ENCODE measurements at regions of chr4 and their contacts with region 1.

Region 1: DNA sequence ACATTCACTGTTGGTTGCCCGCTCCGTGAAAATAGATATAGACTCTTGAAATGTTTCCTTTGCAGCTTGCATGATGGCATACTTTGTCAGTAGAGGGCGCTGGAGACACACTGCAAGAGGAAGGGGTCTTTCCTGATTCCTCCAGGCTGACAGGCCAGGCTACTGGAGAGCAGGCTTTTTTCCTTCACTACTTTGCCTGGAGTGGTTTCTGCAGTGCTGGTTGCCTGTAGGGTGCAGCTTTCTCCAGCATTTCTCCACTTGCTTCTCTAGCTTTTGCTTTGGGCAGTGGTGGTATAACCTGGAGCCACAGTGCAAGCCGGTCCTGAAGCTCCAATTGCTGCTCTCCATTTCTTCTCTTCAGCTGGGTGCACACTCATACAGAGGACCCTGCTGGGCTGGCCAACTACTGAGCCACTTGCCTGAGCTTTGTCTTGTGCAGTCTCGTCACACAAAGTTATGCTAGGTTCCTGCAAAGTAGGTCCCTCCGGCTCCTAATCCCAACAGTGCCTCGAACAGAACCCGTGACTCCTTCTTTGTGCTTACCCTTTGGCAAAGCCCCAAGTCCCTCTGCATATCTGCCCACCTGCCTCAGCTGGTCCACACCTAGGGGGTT is 46.3 kb downstream of the RASSF6 start:
- DNase-seq: peak; percentile 54
- ATAC-seq: peak; percentile 88
- H3K4me3 ChIP-seq: no peak overlapping the region
- H3K27ac ChIP-seq: no peak overlapping the region
- H3K4me1 ChIP-seq: no peaks in the 10 kb centered on the region
- H3K27me3 ChIP-seq: no peaks in the 10 kb centered on the region
- CTCF ChIP-seq: peak; percentile 68 to 91 (median 88); a peak in 5 of 6 replicates
- POLR2A ChIP-seq: no peak
- RAD21 ChIP-seq: peak; percentile 86

Region 2: DNA sequence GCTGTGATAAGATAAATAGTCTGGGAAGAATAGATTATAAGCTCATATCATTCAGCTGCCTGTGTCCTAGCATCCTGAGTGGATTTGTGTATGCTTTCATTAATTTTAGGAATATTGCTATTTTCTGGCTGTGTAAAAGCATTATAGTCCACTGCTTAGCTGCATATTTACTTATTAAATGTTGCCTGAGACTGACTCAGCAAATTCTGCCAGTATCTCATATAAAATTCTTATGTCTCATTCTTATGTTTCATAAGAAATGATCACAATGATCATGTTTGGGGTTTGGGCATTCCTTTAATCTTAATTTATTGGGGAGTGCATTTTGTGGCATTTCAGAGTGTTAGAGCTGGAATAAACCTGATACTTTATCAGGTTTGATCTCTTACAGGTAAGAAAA is 11.4 kb after region 1 on chr4:
- CTCF ChIA-PET with region 1: interaction called, 11 read pairs
- POLR2A ChIA-PET with region 1: no interaction called
- RAD21 ChIA-PET with region 1: no interaction called
- intact Hi-C with region 1: no loop called
- DNase-seq: no peak
- ATAC-seq: no peak
- H3K4me3 ChIP-seq: no peak overlapping the region
- H3K27ac ChIP-seq: no peak overlapping the region
- H3K4me1 ChIP-seq: no peaks in the 10 kb centered on the region
- H3K27me3 ChIP-seq: no peaks in the 10 kb centered on the region
- CTCF ChIP-seq: no peak
- POLR2A ChIP-seq: no peak
- RAD21 ChIP-seq: no peak

Region 3: GRCh38 chr4:73872316-73873108 is 298.6 kb after region 1 on chr4:
- CTCF ChIA-PET with region 1: no interaction called
- POLR2A ChIA-PET with region 1: no interaction called
- RAD21 ChIA-PET with region 1: no interaction called
- intact Hi-C with region 1: no loop called
- DNase-seq: no peak
- ATAC-seq: no peak
- H3K4me3 ChIP-seq: no peak overlapping the region
- H3K27ac ChIP-seq: no peak overlapping the region
- H3K4me1 ChIP-seq: peaks cover 0 to 13% of the 10 kb centered on the region in 2 experiments; a peak in 3 of 4 replicates
- H3K27me3 ChIP-seq: no peaks in the 10 kb centered on the region
- CTCF ChIP-seq: no peak
- POLR2A ChIP-seq: no peak
- RAD21 ChIP-seq: no peak

Region 4: DNA sequence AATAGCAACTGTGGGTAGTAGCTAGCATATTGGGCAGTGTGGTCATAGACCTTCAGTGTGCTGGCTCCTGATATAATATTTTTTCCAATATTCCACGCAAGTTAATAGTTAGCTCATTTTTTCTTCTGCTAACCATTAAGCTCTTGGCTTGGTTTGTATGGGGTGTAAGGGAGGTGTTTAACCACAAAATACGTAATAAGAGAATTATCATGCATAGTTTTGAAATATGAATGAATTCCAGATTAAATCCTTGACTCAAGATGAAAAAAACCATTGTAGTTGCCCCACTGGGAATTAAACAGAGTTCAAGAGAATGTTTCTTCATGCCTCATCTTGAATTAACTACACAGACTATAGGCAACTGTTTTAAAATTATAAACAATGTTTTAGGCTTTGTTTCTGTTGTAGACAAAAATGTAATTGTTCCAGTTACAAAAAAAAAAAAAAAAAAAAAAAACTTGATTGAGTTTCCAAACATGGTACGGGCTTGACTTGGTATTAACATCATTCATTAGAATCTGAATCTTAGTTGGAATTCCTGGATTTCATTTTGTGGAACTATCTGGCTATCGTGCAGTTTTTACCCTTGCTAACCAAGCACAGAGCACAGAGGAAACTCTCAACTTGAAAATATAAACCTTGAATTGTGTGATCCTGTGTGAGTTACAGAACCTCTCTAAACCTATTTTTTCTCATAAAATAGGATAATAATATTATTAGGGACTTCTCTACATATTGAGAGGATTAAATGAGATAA is 323.7 kb after region 1 on chr4:
- CTCF ChIA-PET with region 1: no interaction called
- POLR2A ChIA-PET with region 1: no interaction called
- RAD21 ChIA-PET with region 1: no interaction called
- intact Hi-C with region 1: no loop called
- DNase-seq: no peak
- ATAC-seq: no peak
- H3K4me3 ChIP-seq: no peak overlapping the region
- H3K27ac ChIP-seq: no peak overlapping the region
- H3K4me1 ChIP-seq: no peaks in the 10 kb centered on the region
- H3K27me3 ChIP-seq: no peaks in the 10 kb centered on the region
- CTCF ChIP-seq: no peak
- POLR2A ChIP-seq: no peak
- RAD21 ChIP-seq: no peak

Measured in HCT116 (cell line).